ENCODE measurements at regions of chr1 and their contacts with region 1.

Region 1: GRCh38 chr1:119711804-119712341 is at the start of gene PHGDH:
- DNase-seq: peak; percentile 93

Region 2: DNA sequence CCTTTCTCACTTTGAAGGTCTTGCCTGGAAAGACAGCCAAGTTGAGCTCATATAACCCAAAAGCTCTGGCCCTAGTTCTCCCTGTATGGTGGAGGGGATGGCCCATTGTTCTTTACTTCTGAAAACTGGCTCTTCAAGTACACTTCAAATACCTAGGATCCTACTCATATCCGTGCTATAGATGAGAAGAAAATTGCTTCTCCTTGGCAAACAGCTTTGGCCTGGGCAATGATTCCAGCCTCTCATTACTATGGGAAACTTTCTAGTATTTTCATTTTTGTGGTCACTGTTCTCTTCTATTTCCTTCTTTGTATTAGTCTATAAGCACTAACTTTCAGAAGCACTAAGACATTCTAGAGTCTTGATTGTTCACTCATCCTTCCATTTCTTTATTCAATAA is 117.5 kb before region 1 on chr1:
- CTCF ChIA-PET with region 1: interaction called, 10 read pairs
- POLR2A ChIA-PET with region 1: no interaction called
- DNase-seq: no peak

Region 3: GRCh38 chr1:119647734-119648619 is 63.9 kb before region 1 on chr1 and contains the start of gene ZNF697:
- CTCF ChIA-PET with region 1: interaction called, 5 read pairs
- POLR2A ChIA-PET with region 1: interaction called, 15 read pairs
- DNase-seq: peak; percentile 93

Region 4: GRCh38 chr1:119675349-119676345 is 36.2 kb before region 1 on chr1:
- CTCF ChIA-PET with region 1: interaction called, 6 read pairs
- POLR2A ChIA-PET with region 1: interaction called, 27 read pairs
- DNase-seq: peak; percentile 86

Region 5: DNA sequence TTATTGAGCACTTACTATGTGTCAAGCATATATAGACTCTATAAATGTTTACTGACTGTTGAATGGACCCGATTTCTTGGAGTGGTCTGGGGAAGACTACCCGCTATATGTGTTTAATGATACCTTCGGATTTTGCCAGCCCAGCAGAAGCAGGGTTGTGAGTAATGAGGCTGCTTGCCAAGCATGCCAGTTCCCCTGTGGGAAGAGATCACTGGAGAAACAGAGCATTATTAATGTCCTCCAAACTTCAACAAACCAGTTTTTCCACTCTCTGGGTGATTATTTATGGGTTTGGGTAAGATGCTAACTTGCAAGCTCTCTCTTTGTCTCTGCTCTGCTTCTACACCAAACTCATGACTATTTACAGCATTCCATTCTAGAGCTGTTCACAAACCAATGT is 25.2 kb before region 1 on chr1:
- CTCF ChIA-PET with region 1: no interaction called
- POLR2A ChIA-PET with region 1: interaction called, 15 read pairs
- DNase-seq: no peak

Region 6: DNA sequence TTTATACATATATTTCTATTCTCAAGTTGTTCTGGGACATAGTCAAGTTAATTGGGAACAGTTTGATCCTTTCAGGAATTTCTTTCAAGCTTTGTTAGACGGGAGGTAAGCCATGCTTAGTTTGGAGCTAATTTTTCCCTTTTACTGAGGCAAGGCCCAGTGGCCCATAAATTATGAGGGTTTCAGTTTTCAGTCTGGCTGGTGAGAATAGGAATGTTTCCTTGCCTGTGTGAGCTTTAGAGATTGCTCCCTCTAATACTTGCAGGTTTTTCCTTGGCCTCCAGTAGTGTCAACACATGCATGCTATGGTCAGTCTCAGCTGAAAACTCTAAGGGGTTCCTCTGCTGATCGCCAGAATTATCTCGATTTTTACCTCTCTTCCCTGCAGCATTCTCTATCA is 14.3 kb before region 1 on chr1:
- CTCF ChIA-PET with region 1: interaction called, 4 read pairs
- POLR2A ChIA-PET with region 1: interaction called, 25 read pairs
- DNase-seq: no peak

Region 7: GRCh38 chr1:119724611-119725218 is 12.8 kb after region 1 on chr1:
- CTCF ChIA-PET with region 1: no interaction called
- POLR2A ChIA-PET with region 1: interaction called, 10 read pairs
- DNase-seq: no peak

Region 8: GRCh38 chr1:119795261-119796200 is 83.7 kb after region 1 on chr1:
- CTCF ChIA-PET with region 1: no interaction called
- POLR2A ChIA-PET with region 1: no interaction called
- DNase-seq: no peak

Region 9: GRCh38 chr1:119870917-119871596 is 159.2 kb after region 1 on chr1:
- CTCF ChIA-PET with region 1: no interaction called
- POLR2A ChIA-PET with region 1: no interaction called
- DNase-seq: peak; percentile 91

Measured in HEK293T (cell line).